Common myeloid progenitor, CD34-positive (primary cell): ENCODE measurements at regions of chr21 and their contacts with region 1.

Region 1: GRCh38 chr21:33444499-33444898 is 35.3 kb downstream of the TMEM50B start:
- DNase-seq: no peak
- H3K4me3 ChIP-seq: no peak overlapping the region
- H3K27ac ChIP-seq: no peak overlapping the region
- H3K4me1 ChIP-seq: no peaks in the 10 kb centered on the region
- H3K27me3 ChIP-seq: no peaks in the 10 kb centered on the region

Region 2: GRCh38 chr21:33461538-33462250 is 17.2 kb after region 1 on chr21:
- CTCF ChIA-PET with region 1: interaction called, 15 read pairs
- POLR2A ChIA-PET with region 1: no interaction called
- DNase-seq: no peak
- H3K4me3 ChIP-seq: no peak overlapping the region
- H3K27ac ChIP-seq: no peak overlapping the region
- H3K4me1 ChIP-seq: no peaks in the 10 kb centered on the region
- H3K27me3 ChIP-seq: no peaks in the 10 kb centered on the region